ENCODE measurements at regions of chr13 and their contacts with region 1.

Region 1: GRCh38 chr13:102913914-102914313 is 68.1 kb downstream of the ERCC5 start:
- DNase-seq: peak; percentile 81
- H3K4me3 ChIP-seq: no peak overlapping the region
- H3K27ac ChIP-seq: peak overlapping the region; percentile 94
- H3K4me1 ChIP-seq: peaks cover 62% of the 10 kb centered on the region
- H3K27me3 ChIP-seq: no peaks in the 10 kb centered on the region
- CTCF ChIP-seq: no peak

Region 2: GRCh38 chr13:103067751-103068555 is 154.0 kb after region 1 on chr13:
- CTCF ChIA-PET with region 1: interaction called, 4 read pairs
- dilution Hi-C with region 1: no loop called
- in situ Hi-C with region 1: loop called in 1 of 2 experiments (anchors 10 kb)
- intact Hi-C with region 1: loop called (anchors 1 kb)
- DNase-seq: peak; percentile 14
- H3K4me3 ChIP-seq: no peak overlapping the region
- H3K27ac ChIP-seq: no peak overlapping the region
- H3K4me1 ChIP-seq: peaks cover 3% of the 10 kb centered on the region
- H3K27me3 ChIP-seq: no peaks in the 10 kb centered on the region
- CTCF ChIP-seq: peak; percentile 24 to 85

Region 3: DNA sequence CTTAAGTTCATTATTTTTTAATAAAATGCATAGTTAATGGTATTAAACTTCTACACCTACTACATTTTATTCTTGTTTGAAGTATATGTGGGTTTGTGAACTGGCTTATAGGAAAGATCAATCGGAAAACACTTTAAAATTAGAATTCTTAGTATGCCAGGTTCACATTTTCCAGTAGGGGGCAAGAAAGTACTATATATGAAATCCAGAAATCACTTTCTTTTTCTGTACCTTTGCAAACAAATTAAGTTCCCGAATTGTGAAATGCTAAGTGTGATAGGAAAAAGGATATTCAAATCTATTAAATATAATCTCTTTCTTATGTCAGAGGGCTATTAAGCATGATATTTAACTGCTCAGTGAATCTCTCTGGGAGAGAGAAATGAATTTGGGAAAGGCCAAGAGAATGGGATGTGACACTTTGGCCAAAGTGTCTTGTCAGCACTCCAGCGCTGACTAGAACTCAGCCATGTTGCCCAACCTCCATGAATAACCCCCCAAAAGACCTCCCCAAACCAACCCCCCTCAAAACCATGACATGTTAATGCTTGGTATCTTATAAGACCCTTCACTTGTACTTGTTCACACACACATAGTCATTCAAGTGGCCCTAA is 274.9 kb after region 1 on chr13:
- CTCF ChIA-PET with region 1: no interaction called
- dilution Hi-C with region 1: no loop called
- in situ Hi-C with region 1: no loop called
- intact Hi-C with region 1: loop called (anchors 1 kb)
- DNase-seq: peak; percentile 23
- H3K4me3 ChIP-seq: no peak overlapping the region
- H3K27ac ChIP-seq: no peak overlapping the region
- H3K4me1 ChIP-seq: no peaks in the 10 kb centered on the region
- H3K27me3 ChIP-seq: no peaks in the 10 kb centered on the region
- CTCF ChIP-seq: peak; percentile 58 to 68

Region 4: DNA sequence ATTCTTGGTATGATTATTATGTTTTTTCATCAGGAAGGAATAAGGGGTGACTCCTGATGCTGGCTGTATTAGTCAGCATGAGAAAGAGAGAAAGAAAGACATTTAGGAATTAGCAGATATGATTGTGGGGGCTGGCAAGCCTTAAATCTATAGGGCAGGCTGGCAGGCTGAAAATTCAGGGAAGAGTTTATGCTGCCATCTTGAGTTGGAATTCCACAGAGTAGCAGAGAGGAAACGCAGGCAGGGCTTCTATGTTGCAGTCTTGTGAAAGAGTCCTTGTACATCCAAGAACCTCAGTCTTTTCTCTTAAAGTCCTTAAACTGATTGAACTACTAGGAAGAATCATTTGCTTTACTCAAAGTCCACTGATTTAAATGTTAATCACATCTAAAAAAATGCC is 415.0 kb after region 1 on chr13:
- CTCF ChIA-PET with region 1: no interaction called
- dilution Hi-C with region 1: no loop called
- in situ Hi-C with region 1: no loop called
- intact Hi-C with region 1: loop called (anchors 5 kb)
- DNase-seq: peak; percentile 1
- H3K4me3 ChIP-seq: no peak overlapping the region
- H3K27ac ChIP-seq: no peak overlapping the region
- H3K4me1 ChIP-seq: no peaks in the 10 kb centered on the region
- H3K27me3 ChIP-seq: no peaks in the 10 kb centered on the region
- CTCF ChIP-seq: peak in 1 of 2 donors; percentile 10